IMR-90 (cell line): ENCODE measurements at regions of chrX and their contacts with region 1.

Region 1: GRCh38 chrX:1453951-1454785 is 1.5 kb upstream of the ASMTL start:
- DNase-seq: peak; percentile 69
- ATAC-seq: peak; percentile 11
- H3K4me3 ChIP-seq: peak overlapping the region; percentile 55
- H3K27ac ChIP-seq: no peak overlapping the region
- H3K4me1 ChIP-seq: no peaks in the 10 kb centered on the region; the same call in 1 of the 2 replicates
- H3K27me3 ChIP-seq: no peaks in the 10 kb centered on the region
- CTCF ChIP-seq: peak; percentile 96
- POLR2A ChIP-seq: no peak
- RAD21 ChIP-seq: peak; percentile 85

Region 2: DNA sequence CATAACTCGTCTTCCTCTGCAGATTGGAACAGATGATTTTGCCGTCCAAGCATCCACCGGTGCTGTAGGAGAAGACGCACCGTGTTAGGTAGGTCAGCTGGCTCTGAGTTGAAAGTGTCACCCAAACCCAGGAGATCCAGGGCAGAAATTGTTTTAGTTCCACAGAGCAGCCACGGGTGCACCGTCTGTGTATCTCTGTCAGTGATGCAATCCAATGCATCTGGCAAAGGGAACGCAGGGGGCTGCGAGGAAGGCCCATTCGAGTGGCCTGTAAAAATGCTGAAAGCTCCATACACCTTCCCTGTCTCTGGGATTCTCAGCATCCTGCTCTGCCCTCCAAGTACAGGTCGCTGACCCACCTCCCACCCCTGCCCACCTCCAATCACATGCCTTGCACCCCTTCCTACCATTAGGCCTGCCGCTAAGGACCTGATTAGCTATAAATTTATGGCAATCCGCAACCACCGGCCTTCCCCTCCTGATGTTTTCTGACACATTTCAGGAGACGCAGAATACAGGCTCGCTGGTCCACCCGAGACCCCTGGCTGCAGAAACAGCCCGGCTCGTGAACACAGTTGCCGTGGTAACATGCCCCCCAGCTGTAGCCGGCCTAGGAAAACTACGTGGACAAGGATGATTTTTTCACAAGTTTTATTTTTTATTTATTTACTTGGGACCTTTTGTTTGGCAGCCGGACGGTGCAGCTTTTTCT is 863.3 kb before region 1 on chrX:
- CTCF ChIA-PET with region 1: no interaction called
- POLR2A ChIA-PET with region 1: no interaction called
- dilution Hi-C with region 1: no loop called
- in situ Hi-C with region 1: no loop called
- intact Hi-C with region 1: no loop called
- DNase-seq: no peak
- ATAC-seq: no peak
- H3K4me3 ChIP-seq: no peak overlapping the region
- H3K27ac ChIP-seq: no peak overlapping the region
- H3K4me1 ChIP-seq: no peaks in the 10 kb centered on the region
- H3K27me3 ChIP-seq: no peaks in the 10 kb centered on the region
- CTCF ChIP-seq: no peak
- POLR2A ChIP-seq: no peak
- RAD21 ChIP-seq: no peak

Region 3: GRCh38 chrX:1580735-1581531 is 126.8 kb after region 1 on chrX:
- CTCF ChIA-PET with region 1: no interaction called
- POLR2A ChIA-PET with region 1: no interaction called
- dilution Hi-C with region 1: no loop called
- in situ Hi-C with region 1: loop called (anchors 25 kb)
- intact Hi-C with region 1: loop called (anchors 1 kb)
- DNase-seq: no peak
- ATAC-seq: no peak
- H3K4me3 ChIP-seq: no peak overlapping the region
- H3K27ac ChIP-seq: no peak overlapping the region
- H3K4me1 ChIP-seq: no peaks in the 10 kb centered on the region
- H3K27me3 ChIP-seq: no peaks in the 10 kb centered on the region
- CTCF ChIP-seq: peak; percentile 29; the same call in 1 of the 2 replicates
- POLR2A ChIP-seq: no peak
- RAD21 ChIP-seq: 0 out of 2 replicates have a peak, but pooled peaks have one; percentile 9

Region 4: DNA sequence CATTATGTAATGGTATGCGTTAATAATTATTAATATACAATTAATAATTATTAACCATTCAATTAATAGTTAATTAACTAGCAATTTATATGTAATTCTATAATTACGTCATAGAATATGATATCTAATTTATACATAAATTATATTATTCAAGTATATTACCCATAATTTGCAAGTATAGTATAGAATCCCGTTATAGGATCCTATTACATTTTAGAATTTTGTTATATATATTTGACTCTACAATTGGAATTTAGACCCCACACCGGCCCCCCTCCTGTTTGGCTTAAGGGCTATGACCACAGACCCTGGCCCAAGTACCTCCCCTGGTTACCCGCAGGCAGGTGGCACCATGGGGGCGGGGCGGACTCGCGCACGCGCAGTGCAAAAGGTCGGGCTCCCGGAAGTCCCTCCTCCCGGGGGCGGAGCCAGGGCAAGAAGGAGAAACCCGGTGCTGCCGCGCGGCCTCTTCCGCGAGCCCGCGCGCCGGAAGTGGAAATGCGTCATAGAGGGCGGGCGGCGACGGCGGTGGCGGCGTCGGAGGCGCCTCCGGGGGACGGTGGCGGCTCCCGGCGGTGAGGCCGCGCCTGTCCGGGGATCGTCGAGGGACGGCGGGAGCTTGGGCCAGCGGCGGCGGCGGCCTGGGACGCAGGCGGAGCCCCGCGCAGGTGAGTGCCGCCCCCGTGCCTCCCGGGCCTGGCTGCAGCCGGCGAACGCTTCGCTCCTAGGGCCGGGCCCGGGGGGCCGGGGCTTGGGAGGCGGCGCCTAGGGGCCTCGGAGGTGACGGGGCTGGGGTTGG is 137.1 kb after region 1 on chrX and contains the start of gene AKAP17A:
- CTCF ChIA-PET with region 1: no interaction called
- POLR2A ChIA-PET with region 1: no interaction called
- dilution Hi-C with region 1: no loop called
- in situ Hi-C with region 1: loop called (anchors 25 kb)
- intact Hi-C with region 1: no loop called
- DNase-seq: peak; percentile 90
- ATAC-seq: peak; percentile 91
- H3K4me3 ChIP-seq: peak within 1 kb of the TSS; percentile 95
- H3K27ac ChIP-seq: peak within 1 kb of the TSS; percentile 83
- H3K4me1 ChIP-seq: peaks cover 3% of the 10 kb centered on the region; the same call in 1 of the 2 replicates
- H3K27me3 ChIP-seq: no peaks in the 10 kb centered on the region
- CTCF ChIP-seq: 0 out of 2 replicates have a peak, but pooled peaks have one; percentile 13
- POLR2A ChIP-seq: peak; percentile 90
- RAD21 ChIP-seq: no peak
- total RNA-seq, gene AKAP17A: 9.0 and 10.6 TPM in 2 replicates

Region 5: GRCh38 chrX:1649621-1650020 is 195.5 kb after region 1 on chrX:
- CTCF ChIA-PET with region 1: no interaction called
- POLR2A ChIA-PET with region 1: no interaction called
- dilution Hi-C with region 1: no loop called
- in situ Hi-C with region 1: no loop called
- intact Hi-C with region 1: loop called (anchors 5 kb)
- DNase-seq: no peak
- ATAC-seq: no peak
- H3K4me3 ChIP-seq: peak overlapping the region; percentile 45; the same call in 1 of the 2 replicates
- H3K27ac ChIP-seq: no peak overlapping the region
- H3K4me1 ChIP-seq: no peaks in the 10 kb centered on the region
- H3K27me3 ChIP-seq: no peaks in the 10 kb centered on the region
- CTCF ChIP-seq: no peak
- POLR2A ChIP-seq: no peak
- RAD21 ChIP-seq: no peak

Region 6: GRCh38 chrX:2595258-2595657 is 1141.1 kb after region 1 on chrX:
- CTCF ChIA-PET with region 1: no interaction called
- POLR2A ChIA-PET with region 1: no interaction called
- dilution Hi-C with region 1: no loop called
- in situ Hi-C with region 1: loop called (anchors 10 kb)
- intact Hi-C with region 1: loop called (anchors 1 kb)
- DNase-seq: peak; percentile 11
- ATAC-seq: no peak
- H3K4me3 ChIP-seq: no peak overlapping the region
- H3K27ac ChIP-seq: no peak overlapping the region
- H3K4me1 ChIP-seq: peaks cover 1% of the 10 kb centered on the region; the same call in 1 of the 2 replicates
- H3K27me3 ChIP-seq: no peaks in the 10 kb centered on the region
- CTCF ChIP-seq: no peak
- POLR2A ChIP-seq: no peak
- RAD21 ChIP-seq: no peak

Region 7: DNA sequence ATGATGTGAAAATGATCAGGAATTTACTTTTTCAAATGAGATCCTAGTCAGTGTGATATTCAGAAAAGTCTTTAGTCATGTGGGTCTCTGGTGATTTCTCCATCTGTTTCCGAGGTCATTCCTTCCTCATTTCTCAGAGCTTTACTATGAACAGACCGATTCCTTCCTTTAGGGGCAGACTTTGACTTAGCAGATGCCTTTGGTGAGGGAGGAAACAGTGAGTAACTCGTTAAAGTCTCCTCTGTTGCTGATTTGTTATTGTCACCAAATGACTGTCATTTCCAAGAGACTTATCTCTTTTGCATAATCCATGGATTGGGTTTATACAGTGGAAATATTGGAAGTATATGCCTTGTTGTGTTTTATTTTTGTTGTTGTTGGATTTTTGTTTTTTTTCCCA is 1160.7 kb after region 1 on chrX:
- CTCF ChIA-PET with region 1: no interaction called
- POLR2A ChIA-PET with region 1: no interaction called
- dilution Hi-C with region 1: no loop called
- in situ Hi-C with region 1: no loop called
- intact Hi-C with region 1: loop called (anchors 5 kb)
- DNase-seq: peak; percentile 83
- ATAC-seq: peak; percentile 93
- H3K4me3 ChIP-seq: no peak overlapping the region
- H3K27ac ChIP-seq: no peak overlapping the region
- H3K4me1 ChIP-seq: peaks cover 6% of the 10 kb centered on the region
- H3K27me3 ChIP-seq: no peaks in the 10 kb centered on the region
- CTCF ChIP-seq: peak; percentile 71
- POLR2A ChIP-seq: no peak
- RAD21 ChIP-seq: peak; percentile 52

Region 8: GRCh38 chrX:2819345-2820135 is 1365.4 kb after region 1 on chrX:
- CTCF ChIA-PET with region 1: no interaction called
- POLR2A ChIA-PET with region 1: no interaction called
- dilution Hi-C with region 1: no loop called
- in situ Hi-C with region 1: loop called (anchors 25 kb)
- intact Hi-C with region 1: loop called (anchors 10 kb)
- DNase-seq: peak; percentile 39
- ATAC-seq: peak; percentile 78
- H3K4me3 ChIP-seq: no peak overlapping the region
- H3K27ac ChIP-seq: no peak overlapping the region
- H3K4me1 ChIP-seq: no peaks in the 10 kb centered on the region
- H3K27me3 ChIP-seq: peaks cover 4% of the 10 kb centered on the region; the same call in 1 of the 2 replicates
- CTCF ChIP-seq: peak; percentile 62
- POLR2A ChIP-seq: no peak
- RAD21 ChIP-seq: peak; percentile 70